ENCODE measurements at regions of chr4 and their contacts with region 1.

Region 1: DNA sequence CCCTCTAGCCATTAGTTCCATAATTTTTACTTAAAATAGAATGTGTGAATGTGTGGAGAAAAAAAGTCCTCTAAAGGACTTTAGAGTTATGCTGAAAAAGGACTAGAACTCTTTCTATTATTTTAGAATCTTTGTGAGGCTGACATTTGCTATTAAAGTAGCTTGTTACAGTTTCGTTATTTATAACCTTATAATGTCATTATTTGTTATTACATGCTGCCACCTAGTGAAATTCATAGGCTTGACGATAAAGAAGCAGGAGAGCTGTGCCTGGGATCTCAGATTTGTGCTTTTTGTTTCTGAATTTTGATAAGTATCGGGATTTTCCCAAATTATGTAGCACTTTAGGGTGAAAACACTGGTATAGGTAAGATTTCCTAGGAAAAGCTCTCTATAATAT is 38.5 kb upstream of the TAPT1 start:
- DNase-seq: peak; percentile 42
- CTCF ChIP-seq: peak; percentile 56

Region 2: DNA sequence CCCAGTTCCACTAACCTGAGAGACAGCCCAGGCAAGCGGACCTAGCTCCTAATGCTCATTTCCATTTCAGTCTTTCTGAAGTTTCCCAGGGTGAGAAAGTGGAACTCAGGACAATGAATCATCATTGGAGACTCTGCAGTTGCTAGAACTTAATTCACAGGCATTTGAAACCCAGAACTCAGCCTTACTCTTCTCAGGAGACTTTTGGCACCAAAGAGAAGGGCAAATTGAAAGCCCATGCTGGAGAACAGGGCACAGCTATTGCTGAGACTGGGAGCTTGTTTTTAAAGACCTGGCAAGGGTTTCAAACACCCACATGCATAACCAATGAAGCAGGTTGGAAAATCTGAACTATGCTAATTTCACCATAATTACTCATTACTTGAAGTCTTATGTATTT is 525.9 kb before region 1 on chr4:
- CTCF ChIA-PET with region 1: no interaction called
- POLR2A ChIA-PET with region 1: no interaction called
- DNase-seq: no peak
- CTCF ChIP-seq: no peak

Region 3: DNA sequence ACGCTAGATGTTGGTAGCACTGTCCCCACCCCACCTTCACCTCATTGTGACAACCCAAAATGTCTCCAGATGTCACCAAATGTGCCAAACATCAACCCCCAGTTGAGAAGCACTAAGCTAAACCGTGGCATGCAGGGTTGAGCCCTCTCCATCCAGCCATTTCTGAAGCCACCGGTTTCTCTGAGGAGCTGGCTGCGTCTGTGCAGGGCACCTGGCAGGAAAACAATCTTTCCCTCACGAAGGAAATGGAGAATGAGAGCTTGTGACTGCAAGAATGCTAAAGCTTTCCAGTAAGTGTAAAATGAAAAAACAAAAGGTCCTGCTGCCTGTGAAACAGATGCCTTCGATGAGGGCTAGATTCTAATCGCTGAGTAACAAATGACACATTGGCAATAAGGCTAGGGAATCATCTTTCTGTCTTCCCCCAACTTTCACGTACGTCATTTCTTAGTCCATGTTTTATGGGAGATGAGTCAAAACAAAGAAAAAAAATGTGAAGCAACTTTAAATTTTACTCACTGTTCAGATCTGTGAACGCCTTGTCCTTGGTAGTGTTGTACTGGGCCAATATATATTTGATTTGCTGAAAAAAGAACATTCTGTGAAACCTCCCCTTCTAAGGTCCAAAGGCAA is 240.9 kb before region 1 on chr4:
- CTCF ChIA-PET with region 1: interaction called, 27 read pairs
- POLR2A ChIA-PET with region 1: no interaction called
- DNase-seq: no peak
- CTCF ChIP-seq: no peak

Region 4: GRCh38 chr4:16029262-16029661 is 235.5 kb before region 1 on chr4:
- CTCF ChIA-PET with region 1: interaction called, 27 read pairs
- POLR2A ChIA-PET with region 1: no interaction called
- DNase-seq: no peak
- CTCF ChIP-seq: no peak

Measured in GM10248 (cell line).